HepG2 (cell line): ENCODE measurements at regions of chr16 and their contacts with region 1.

Region 1: GRCh38 chr16:47258874-47259461 is 115.2 kb upstream of the NETO2 start:
- DNase-seq: peak; percentile 38
- ATAC-seq: peak; percentile 80
- H3K4me3 ChIP-seq: no peak overlapping the region
- H3K27ac ChIP-seq: no peak overlapping the region
- H3K4me1 ChIP-seq: no peaks in the 10 kb centered on the region
- H3K27me3 ChIP-seq: no peaks in the 10 kb centered on the region
- CTCF ChIP-seq: peak; percentile 58
- EP300 ChIP-seq: no peak
- POLR2A ChIP-seq: no peak
- RAD21 ChIP-seq: peak; percentile 34; the same call in 1 of the 2 replicates

Region 2: GRCh38 chr16:48041861-48042480 is 783.0 kb after region 1 on chr16:
- CTCF ChIA-PET with region 1: no interaction called
- POLR2A ChIA-PET with region 1: no interaction called
- in situ Hi-C with region 1: no loop called
- intact Hi-C with region 1: loop called (anchors 5 kb)
- DNase-seq: peak; percentile 34
- ATAC-seq: peak; percentile 94
- H3K4me3 ChIP-seq: no peak overlapping the region
- H3K27ac ChIP-seq: no peak overlapping the region
- H3K4me1 ChIP-seq: peaks cover 6% of the 10 kb centered on the region; the same call in 1 of the 2 replicates
- H3K27me3 ChIP-seq: peaks cover 0 to 1% of the 10 kb centered on the region in 2 experiments; a peak in 2 of 5 replicates
- CTCF ChIP-seq: peak; percentile 60
- EP300 ChIP-seq: no peak
- POLR2A ChIP-seq: no peak
- RAD21 ChIP-seq: peak; percentile 61

Region 3: DNA sequence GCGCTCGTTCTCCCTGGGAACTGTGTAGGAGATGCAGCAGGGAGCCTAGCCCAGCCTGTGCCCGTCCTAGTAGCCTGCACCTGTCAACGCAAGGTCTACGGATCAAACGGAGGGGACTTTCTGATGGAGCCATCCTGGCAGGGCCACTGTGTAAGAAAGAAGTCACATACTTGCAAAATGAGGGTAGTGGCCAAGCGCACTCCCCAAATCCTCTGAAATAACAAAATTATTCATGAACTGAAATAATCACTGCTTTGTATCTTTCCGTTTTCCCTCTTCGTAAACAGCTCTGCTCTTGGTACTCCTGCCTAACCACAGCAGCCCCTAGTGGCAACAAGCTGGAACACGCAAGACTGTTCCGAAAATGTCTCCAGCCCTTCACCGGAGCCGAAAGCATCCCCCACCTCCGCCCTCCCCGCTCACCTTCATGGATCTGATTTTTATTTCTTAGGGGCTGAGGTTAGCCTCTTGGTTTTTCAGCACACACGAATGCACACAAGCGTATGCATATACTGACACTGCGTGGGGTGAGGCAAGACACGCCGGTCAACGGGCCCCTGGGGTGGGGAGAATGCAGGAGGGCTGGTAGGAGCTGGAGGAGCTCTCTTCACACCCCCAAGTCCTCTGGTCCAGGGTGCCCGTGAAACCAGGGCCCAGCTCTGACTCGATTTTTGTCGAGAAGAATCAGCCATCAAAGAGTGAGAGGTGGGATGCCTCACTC is 796.1 kb after region 1 on chr16:
- CTCF ChIA-PET with region 1: interaction called, 8 read pairs
- POLR2A ChIA-PET with region 1: no interaction called
- in situ Hi-C with region 1: no loop called
- intact Hi-C with region 1: loop called (anchors 5 kb)
- DNase-seq: peak; percentile 35
- ATAC-seq: peak; percentile 95
- H3K4me3 ChIP-seq: no peak overlapping the region
- H3K27ac ChIP-seq: no peak overlapping the region
- H3K4me1 ChIP-seq: 0 out of 2 replicates have a peak, but pooled peaks cover 8% of the 10 kb centered on the region
- H3K27me3 ChIP-seq: peaks cover 0 to 23% of the 10 kb centered on the region in 2 experiments; a peak in 4 of 5 replicates
- CTCF ChIP-seq: peak; percentile 90
- EP300 ChIP-seq: no peak
- POLR2A ChIP-seq: no peak
- RAD21 ChIP-seq: peak; percentile 53; the same call in 1 of the 2 replicates

Region 4: GRCh38 chr16:48156790-48157209 is 897.8 kb after region 1 on chr16:
- CTCF ChIA-PET with region 1: no interaction called
- POLR2A ChIA-PET with region 1: no interaction called
- in situ Hi-C with region 1: no loop called
- intact Hi-C with region 1: loop called (anchors 2 kb)
- DNase-seq: peak; percentile 52
- ATAC-seq: peak; percentile 88
- H3K4me3 ChIP-seq: peak overlapping the region in 1 of 3 experiments; percentile 31; a peak in 1 of 6 replicates
- H3K27ac ChIP-seq: no peak overlapping the region
- H3K4me1 ChIP-seq: peaks cover 8% of the 10 kb centered on the region
- H3K27me3 ChIP-seq: peaks cover 4 to 59% of the 10 kb centered on the region in 2 experiments; a peak in 4 of 5 replicates
- CTCF ChIP-seq: peak; percentile 97
- EP300 ChIP-seq: no peak
- POLR2A ChIP-seq: no peak
- RAD21 ChIP-seq: peak; percentile 77